Activated CD8-positive, alpha-beta memory T cell treated with anti-CD3 and anti-CD28 coated beads, Interleukin-2, amount 10 ng/mL, durations not matched to agents 7 days and 5 days (primary cell): ENCODE measurements at regions of chr17 and their contacts with region 1.

Region 1: GRCh38 chr17:67376737-67377487 is at the start of gene PITPNC1:
- DNase-seq: peak; percentile 93
- ATAC-seq: peak; percentile 78
- H3K4me3 Mint-ChIP-seq: peak within 1 kb of the TSS; percentile 83
- H3K27ac Mint-ChIP-seq: peak within 1 kb of the TSS; percentile 87
- H3K4me1 Mint-ChIP-seq: peaks cover 42% of the 10 kb centered on the region
- H3K27me3 Mint-ChIP-seq: no peaks in the 10 kb centered on the region
- total RNA-seq, gene PITPNC1: 44.9 to 67.6 TPM

Region 2: DNA sequence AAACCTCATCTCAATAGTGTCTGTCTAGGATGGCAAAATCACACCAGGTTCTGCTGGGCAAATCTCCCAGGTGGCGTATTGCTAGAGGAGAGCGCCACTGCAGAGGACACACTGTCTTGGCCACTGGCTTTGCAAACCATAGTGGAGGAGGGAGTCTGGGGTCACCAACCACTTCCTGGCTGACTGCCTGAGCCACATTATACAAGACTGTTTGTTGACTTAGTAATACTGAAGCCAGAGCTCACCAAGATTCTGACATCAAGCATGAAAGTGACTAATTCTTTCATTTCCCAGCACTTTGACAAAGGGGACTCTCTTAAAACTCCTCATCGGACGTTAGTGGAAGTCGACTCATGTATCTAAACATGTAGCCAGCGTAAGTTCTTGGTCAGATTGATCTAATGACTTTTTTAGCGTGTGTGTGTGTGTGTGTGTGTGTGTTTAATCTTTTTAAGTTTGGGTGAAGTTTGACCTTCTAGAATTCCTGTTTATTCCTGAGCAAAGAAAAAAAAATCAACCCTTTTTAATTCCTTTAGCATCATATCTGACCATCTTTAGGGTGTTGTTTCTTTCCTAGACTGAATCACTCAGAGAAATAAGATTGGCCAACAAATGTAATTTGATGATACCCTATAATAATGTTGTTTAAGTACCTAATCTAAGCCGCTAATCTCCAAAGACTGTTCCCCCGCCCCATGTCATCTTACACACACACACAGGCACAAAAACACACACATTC is 13.9 kb after region 1 on chr17:
- CTCF ChIA-PET with region 1: interaction called, 64 read pairs
- DNase-seq: peak; percentile 94
- ATAC-seq: peak; percentile 90
- H3K4me3 Mint-ChIP-seq: peak overlapping the region; percentile 78
- H3K27ac Mint-ChIP-seq: peak overlapping the region; percentile 95
- H3K4me1 Mint-ChIP-seq: peaks cover 75% of the 10 kb centered on the region
- H3K27me3 Mint-ChIP-seq: no peaks in the 10 kb centered on the region

Region 3: GRCh38 chr17:67431249-67432048 is 54.5 kb after region 1 on chr17:
- CTCF ChIA-PET with region 1: interaction called, 13 read pairs
- DNase-seq: no peak
- ATAC-seq: peak; percentile 52
- H3K4me3 Mint-ChIP-seq: no peak overlapping the region
- H3K27ac Mint-ChIP-seq: peak overlapping the region; percentile 76
- H3K4me1 Mint-ChIP-seq: peaks cover 62% of the 10 kb centered on the region
- H3K27me3 Mint-ChIP-seq: no peaks in the 10 kb centered on the region

Region 4: DNA sequence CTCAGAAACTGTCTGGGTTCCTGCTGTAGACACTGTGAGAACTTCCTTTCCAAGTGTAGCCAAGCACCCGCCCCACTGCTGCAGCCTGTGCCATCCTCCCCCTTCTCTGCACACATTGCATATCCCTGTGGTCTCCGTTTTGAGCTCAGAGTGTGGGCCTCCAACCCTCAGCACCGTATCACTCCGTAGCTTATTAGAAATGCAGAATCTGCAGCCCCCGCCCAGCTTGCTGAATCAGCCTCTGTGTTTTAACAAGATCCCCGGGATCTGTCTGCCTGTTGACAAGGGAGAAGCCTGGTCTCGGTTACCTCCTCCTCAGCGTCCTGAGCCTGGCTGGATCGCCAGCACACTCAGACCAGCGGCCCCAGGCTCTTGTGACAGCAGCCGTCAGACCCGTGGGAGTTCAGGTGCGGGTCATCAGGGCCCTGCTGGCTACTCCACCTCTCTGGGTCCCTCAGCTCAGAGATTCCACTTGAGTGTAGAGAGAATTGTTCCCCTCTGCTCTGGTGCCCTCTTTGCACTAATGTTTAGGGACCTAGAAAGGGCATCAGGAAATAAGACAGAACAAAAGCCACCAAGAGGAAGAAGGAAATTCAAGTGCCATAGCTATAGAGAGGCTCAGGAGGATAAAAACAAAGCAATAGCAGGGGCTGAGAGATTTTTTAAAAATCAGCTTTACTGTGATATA is 92.4 kb after region 1 on chr17:
- CTCF ChIA-PET with region 1: interaction called, 209 read pairs
- DNase-seq: peak; percentile 68
- ATAC-seq: peak; percentile 88
- H3K4me3 Mint-ChIP-seq: peak overlapping the region; percentile 57
- H3K27ac Mint-ChIP-seq: peak overlapping the region; percentile 83
- H3K4me1 Mint-ChIP-seq: peaks cover 61% of the 10 kb centered on the region
- H3K27me3 Mint-ChIP-seq: no peaks in the 10 kb centered on the region

Region 5: GRCh38 chr17:67602956-67603355 is 226.0 kb after region 1 on chr17:
- CTCF ChIA-PET with region 1: interaction called, 19 read pairs
- DNase-seq: peak; percentile 66
- ATAC-seq: peak; percentile 74
- H3K4me3 Mint-ChIP-seq: no peak overlapping the region
- H3K27ac Mint-ChIP-seq: no peak overlapping the region
- H3K4me1 Mint-ChIP-seq: peaks cover 4% of the 10 kb centered on the region
- H3K27me3 Mint-ChIP-seq: no peaks in the 10 kb centered on the region

Region 6: DNA sequence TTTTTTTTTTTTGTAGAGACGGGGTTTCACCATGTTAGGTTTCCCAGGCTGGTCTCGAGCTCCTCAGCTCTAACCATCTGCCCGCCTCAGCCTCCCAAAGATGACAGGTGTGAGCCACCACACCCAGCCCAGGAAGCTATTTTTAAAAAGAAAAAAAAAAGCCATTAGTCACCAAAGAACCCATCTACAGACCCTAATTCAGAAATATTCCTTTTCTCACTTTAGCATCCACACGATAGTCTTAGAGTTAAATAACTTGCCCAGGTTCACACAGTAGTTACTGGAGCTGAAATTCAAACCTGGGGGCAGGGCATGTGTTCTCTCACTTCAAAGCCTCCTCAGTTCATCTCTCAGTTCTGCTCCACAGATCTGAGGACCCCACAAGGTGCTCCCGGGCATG is 270.6 kb after region 1 on chr17:
- CTCF ChIA-PET with region 1: interaction called, 15 read pairs
- DNase-seq: no peak
- ATAC-seq: no peak
- H3K4me3 Mint-ChIP-seq: no peak overlapping the region
- H3K27ac Mint-ChIP-seq: peak overlapping the region; percentile 59
- H3K4me1 Mint-ChIP-seq: peaks cover 49% of the 10 kb centered on the region
- H3K27me3 Mint-ChIP-seq: no peaks in the 10 kb centered on the region

Region 7: DNA sequence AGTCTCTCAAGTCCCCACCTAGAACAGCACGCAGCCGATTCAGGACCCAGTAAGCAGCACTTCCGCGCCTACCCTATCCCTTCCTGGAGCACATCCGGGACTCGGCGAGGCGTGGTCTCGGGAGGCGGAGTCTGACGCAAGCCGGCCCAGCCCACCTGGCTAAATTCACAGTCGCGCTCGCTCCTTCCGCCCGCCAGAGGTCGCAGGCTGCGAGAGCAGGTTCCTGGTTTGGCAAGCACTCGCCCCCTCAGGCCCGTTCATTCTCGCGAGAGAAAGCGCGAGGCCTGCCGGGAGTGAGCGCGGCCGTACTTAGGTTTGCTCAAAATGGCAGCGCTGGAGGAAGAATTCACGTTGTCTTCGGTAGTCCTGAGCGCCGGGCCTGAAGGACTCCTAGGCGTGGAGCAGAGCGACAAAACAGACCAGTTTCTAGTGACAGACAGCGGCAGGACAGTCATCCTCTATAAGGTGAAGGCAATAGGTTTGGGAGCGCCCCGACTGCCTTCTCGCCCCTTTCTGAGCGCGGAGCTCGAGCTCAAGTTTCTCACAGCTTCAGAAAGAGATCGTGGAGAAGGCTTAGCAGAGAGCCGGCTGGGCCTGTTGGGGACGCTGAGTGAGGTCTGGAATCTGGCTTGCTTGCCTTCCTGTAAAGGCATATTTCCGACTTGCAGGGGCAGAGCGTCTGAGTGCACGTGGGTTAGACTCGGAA is 340.9 kb after region 1 on chr17 and contains the start of gene NOL11:
- CTCF ChIA-PET with region 1: interaction called, 31 read pairs
- DNase-seq: peak; percentile 100
- ATAC-seq: peak; percentile 98
- H3K4me3 Mint-ChIP-seq: peak within 1 kb of the TSS; percentile 94
- H3K27ac Mint-ChIP-seq: peak within 1 kb of the TSS; percentile 95
- H3K4me1 Mint-ChIP-seq: peaks cover 32% of the 10 kb centered on the region
- H3K27me3 Mint-ChIP-seq: no peaks in the 10 kb centered on the region
- total RNA-seq, gene NOL11: 46.8 to 64.7 TPM